MCF 10A (cell line): ENCODE measurements at regions of chr1 and their contacts with region 1.

Region 1: GRCh38 chr1:214213136-214213535 is 67.8 kb upstream of the SMYD2 start:
- DNase-seq: peak; percentile 82
- H3K4me3 Mint-ChIP-seq: peak overlapping the region; percentile 15
- H3K27ac Mint-ChIP-seq: peak overlapping the region; percentile 7
- H3K4me1 Mint-ChIP-seq: peaks cover 20% of the 10 kb centered on the region
- H3K27me3 Mint-ChIP-seq: no peaks in the 10 kb centered on the region
- CTCF ChIP-seq: peak; percentile 25

Region 2: GRCh38 chr1:214198571-214198970 is 14.6 kb before region 1 on chr1:
- CTCF ChIA-PET with region 1: interaction called, 22 read pairs
- POLR2A ChIA-PET with region 1: interaction called, 4 read pairs
- intact Hi-C with region 1: no loop called
- DNase-seq: no peak
- H3K4me3 Mint-ChIP-seq: no peak overlapping the region
- H3K27ac Mint-ChIP-seq: no peak overlapping the region
- H3K4me1 Mint-ChIP-seq: no peaks in the 10 kb centered on the region
- H3K27me3 Mint-ChIP-seq: peaks cover 47% of the 10 kb centered on the region
- CTCF ChIP-seq: no peak

Region 3: DNA sequence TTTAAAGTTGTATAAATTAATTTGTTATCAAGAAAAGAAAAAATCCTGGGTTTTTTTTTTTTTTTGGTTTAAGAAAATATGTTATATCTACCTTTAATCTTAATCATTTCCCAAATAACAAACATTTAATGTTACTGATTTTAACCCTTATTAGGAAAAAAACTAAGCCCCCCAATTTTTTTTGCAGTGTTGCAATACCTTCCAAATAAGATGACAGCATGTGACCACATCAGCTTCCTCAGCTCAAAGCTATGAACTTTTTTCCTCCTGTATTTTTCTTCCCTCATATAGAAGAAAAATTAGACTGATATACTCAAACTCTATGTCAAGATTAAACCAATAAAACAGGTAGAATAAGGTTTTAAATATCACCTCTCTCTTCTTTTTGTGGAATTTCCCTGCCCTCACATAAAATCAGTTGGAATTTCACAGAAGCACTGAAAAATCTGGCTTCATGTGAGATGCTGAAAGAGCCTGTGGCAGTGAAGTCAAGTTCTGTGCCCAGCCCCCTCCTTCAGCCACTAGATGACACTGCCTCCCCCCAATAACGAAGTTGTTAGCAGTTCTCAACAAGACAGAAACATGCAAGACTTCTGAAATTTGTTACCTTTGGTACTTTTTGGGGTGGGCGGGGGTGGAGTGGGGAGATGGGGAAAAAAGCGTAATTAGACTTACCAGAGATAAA is 58.2 kb after region 1 on chr1:
- CTCF ChIA-PET with region 1: interaction called, 12 read pairs
- POLR2A ChIA-PET with region 1: interaction called, 3 read pairs
- intact Hi-C with region 1: no loop called
- DNase-seq: no peak
- H3K4me3 Mint-ChIP-seq: no peak overlapping the region
- H3K27ac Mint-ChIP-seq: no peak overlapping the region
- H3K4me1 Mint-ChIP-seq: no peaks in the 10 kb centered on the region
- H3K27me3 Mint-ChIP-seq: peaks cover 58% of the 10 kb centered on the region
- CTCF ChIP-seq: no peak

Region 4: DNA sequence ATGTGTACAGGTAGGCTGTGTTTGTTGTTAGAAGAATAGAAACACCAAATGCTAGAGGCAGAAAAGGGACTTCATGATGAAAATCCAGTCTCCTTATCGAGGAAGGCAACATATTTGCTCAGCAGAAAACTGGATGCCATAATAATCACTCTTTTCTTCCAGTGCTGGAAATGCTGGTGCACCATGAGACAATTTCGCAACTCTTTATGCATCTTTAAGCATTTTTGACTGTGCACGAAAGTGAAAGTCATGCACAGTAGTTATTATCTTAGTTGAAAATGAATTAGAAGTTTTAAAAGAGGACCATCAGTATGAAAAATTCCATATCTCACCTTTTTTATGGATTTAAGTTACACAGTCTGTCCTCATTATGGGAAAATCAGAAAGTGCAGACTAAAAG is 96.9 kb after region 1 on chr1:
- CTCF ChIA-PET with region 1: interaction called, 75 read pairs
- POLR2A ChIA-PET with region 1: no interaction called
- intact Hi-C with region 1: no loop called
- DNase-seq: peak; percentile 34
- H3K4me3 Mint-ChIP-seq: no peak overlapping the region
- H3K27ac Mint-ChIP-seq: no peak overlapping the region
- H3K4me1 Mint-ChIP-seq: no peaks in the 10 kb centered on the region
- H3K27me3 Mint-ChIP-seq: no peaks in the 10 kb centered on the region
- CTCF ChIP-seq: no peak

Region 5: DNA sequence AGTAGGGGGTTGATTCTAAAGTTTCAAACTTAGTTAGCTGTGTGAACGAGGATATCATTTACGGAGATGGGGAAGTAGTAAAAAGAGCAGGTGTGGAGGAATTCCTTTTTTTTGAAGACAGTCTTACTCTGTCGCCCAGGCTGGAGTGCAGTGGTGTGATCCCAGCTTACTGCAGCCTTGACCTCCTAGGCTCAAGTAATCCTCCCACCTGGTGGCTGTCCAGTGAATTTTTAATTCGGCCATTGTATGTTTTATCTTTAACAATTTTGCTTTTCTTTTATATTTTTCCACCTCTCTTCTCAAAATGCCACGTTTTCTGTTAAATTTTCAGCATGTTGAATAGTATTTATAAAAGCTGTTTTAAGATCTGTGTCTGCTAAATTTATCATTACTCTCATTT is 377.6 kb after region 1 on chr1:
- CTCF ChIA-PET with region 1: interaction called, 50 read pairs
- POLR2A ChIA-PET with region 1: no interaction called
- intact Hi-C with region 1: no loop called
- DNase-seq: no peak
- H3K4me3 Mint-ChIP-seq: no peak overlapping the region
- H3K27ac Mint-ChIP-seq: no peak overlapping the region
- H3K4me1 Mint-ChIP-seq: no peaks in the 10 kb centered on the region
- H3K27me3 Mint-ChIP-seq: no peaks in the 10 kb centered on the region
- CTCF ChIP-seq: peak; percentile 33

Region 6: GRCh38 chr1:214637722-214638458 is 424.8 kb after region 1 on chr1:
- CTCF ChIA-PET with region 1: interaction called, 52 read pairs
- POLR2A ChIA-PET with region 1: no interaction called
- intact Hi-C with region 1: loop called (anchors 1 kb)
- DNase-seq: peak; percentile 71
- H3K4me3 Mint-ChIP-seq: no peak overlapping the region
- H3K27ac Mint-ChIP-seq: peak overlapping the region; percentile 22
- H3K4me1 Mint-ChIP-seq: no peaks in the 10 kb centered on the region
- H3K27me3 Mint-ChIP-seq: no peaks in the 10 kb centered on the region
- CTCF ChIP-seq: peak; percentile 87